PC-9 (cell line): ENCODE measurements at regions of chr19 and their contacts with region 1.

Region 1: DNA sequence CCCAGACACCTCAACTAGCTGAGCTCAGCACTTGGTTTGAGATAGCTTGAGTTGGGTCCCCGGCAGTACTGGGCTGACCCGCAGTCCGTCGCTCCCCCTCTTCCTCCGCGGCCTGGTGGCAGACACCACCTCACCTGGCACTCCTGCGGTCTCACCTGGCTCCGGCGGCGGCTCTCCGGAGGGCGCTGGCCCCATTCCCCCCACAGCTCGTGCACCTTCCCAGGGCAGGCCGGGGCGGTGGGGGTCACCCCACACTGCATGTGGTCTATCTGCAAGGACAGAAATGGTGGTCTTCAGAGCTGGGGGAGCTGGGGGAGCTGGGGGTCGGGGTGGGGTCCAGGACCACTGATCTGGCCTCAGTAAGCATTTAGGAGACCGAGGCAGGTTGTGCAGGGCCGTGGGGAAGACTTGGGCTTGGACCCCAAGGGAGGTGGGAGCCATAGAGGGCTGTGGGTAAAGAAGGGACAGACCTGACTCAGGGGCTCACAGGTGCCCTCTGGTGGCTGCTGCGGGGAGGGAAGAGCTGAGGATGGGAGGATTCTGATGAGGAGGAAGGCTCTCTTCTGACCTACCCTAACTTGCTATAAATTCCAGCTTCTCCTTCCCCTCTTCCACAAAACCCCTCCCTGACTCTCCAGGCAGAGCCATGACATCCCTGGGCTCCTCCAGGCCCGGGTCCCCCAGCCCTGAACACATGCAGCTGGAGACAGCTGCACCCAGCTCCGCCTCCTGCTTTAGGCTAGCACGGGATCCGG is 6.7 kb upstream of the PLIN4 start:
- DNase-seq: peak in 1 of 2 experiments; percentile 46
- H3K4me3 ChIP-seq: no peak overlapping the region
- H3K27ac ChIP-seq: no peak overlapping the region
- H3K4me1 ChIP-seq: peaks cover 16% of the 10 kb centered on the region
- H3K27me3 ChIP-seq: no peaks in the 10 kb centered on the region
- CTCF ChIP-seq: peak; percentile 67

Region 2: DNA sequence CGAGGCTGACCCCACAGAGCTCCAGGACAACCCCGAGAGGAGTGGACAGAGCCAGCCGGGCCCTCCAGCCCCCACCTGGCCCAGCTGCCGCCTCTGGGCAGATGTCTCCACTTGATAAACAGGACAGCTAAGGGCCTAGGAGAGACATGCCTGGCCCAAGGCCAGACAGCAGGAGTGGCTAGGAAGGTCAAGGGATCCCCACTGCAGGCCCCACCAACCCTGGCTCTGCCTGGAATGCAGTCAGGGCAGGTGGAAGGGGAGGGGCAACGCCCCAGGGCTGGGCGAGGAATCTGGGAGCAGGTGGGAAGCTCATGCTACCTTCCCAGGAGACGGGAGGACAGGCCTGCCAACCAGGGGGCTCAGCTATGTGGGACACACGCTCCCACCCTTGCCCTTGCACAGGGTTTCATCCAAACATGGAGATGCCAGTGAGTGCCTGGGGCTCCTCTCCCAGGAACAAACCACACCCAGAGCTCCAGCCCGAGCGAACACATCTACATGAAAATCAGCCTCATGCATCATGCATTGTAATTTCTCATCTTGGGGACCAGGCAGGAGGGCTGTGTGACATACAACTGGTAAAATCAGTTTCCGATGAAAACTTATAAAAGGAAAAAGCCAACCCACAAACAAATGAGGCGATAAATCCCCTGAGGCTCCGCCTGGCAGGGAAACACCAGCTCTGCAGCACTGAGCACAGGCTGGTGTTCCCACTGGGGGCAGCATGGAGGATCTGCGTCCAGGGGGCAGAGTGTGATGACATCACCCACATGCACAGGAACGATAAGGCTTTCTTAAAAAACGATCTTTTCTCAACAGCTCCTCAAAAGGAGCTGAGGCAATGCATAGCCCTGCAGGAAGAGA is 149.6 kb before region 1 on chr19:
- CTCF ChIA-PET with region 1: no interaction called
- POLR2A ChIA-PET with region 1: no interaction called
- intact Hi-C with region 1: no loop called
- DNase-seq: peak; percentile 92 to 97
- H3K4me3 ChIP-seq: peak overlapping the region; percentile 42; the same call in 1 of the 2 replicates
- H3K27ac ChIP-seq: peak overlapping the region; percentile 95
- H3K4me1 ChIP-seq: peaks cover 68% of the 10 kb centered on the region
- H3K27me3 ChIP-seq: no peaks in the 10 kb centered on the region
- CTCF ChIP-seq: no peak; the same call in 1 of the 2 replicates

Region 3: DNA sequence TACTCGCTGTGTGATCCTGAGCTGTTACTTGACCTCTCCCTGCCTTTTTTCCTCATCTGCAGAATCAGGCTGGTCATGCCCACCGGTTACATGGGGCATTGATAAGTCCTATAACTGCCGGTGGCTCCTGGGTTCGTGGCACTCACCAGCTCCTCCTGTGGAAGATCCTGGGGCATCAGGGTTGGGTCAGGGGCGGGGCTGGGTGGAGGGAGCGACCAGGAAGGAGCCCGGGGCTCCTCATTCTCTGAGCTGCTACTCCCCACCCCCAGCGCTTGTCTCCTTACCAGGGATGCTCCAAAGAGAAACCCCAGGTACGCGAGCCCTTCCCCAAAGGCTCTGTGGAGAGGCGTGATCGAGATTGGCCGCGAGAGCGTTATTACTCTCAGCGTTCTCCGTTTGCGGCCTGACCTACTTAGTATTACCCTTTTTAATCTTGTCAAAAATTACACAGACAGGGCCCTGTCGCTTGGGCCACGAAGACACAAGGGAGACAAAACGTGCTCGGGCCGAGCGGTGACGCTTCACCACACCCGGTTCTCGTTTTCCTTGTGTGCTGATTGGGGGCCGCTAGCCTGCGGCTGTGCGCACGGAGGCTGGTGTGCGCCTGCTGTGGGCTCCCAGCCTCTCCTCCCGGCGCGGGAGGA is 42.1 kb before region 1 on chr19:
- CTCF ChIA-PET with region 1: no interaction called
- POLR2A ChIA-PET with region 1: interaction called, 10 read pairs
- intact Hi-C with region 1: no loop called
- DNase-seq: no peak
- H3K4me3 ChIP-seq: no peak overlapping the region
- H3K27ac ChIP-seq: no peak overlapping the region
- H3K4me1 ChIP-seq: no peaks in the 10 kb centered on the region
- H3K27me3 ChIP-seq: no peaks in the 10 kb centered on the region
- CTCF ChIP-seq: no peak

Region 4: DNA sequence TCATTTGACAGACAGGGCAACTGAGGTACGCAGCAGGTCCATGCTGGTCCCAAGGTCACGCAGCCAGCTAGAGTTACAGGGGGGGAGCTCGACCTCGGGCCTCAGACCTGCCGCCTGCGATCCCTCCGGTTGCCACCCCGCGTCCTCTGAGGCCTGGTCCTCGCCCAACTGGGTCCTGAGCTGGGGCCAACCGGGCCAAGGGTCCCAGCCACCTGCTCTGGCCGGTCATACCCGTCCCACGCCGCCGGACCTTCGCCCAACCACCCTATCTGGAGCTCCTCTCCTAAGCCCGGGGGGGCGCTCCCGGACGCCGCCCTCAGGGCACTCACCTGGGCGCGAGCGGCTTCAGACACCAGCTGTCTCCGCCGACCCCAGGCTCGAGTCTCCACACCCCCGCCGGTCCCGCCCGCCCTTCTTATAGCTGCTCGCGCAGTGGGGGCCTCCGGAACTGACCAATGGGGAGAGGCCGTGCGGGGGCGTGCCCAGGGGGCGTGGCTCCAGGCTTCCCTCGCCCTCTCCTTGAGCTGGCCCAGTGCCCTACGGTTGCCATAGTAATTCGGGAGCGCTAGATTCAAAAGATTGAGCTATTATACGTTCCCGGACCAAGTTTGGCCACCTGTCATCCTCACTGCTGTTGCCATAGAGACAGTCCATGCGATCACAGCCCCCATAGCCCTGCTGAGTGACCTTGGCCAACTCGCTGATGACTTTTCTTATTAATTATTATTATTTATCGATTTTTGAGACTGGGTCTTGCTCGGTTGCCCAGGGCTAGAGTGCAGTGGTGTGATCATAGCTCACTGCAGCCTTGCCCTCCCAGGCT is 10.1 kb after region 1 on chr19 and contains the start of gene PLIN5:
- CTCF ChIA-PET with region 1: interaction called, 12 read pairs
- POLR2A ChIA-PET with region 1: interaction called, 4 read pairs
- intact Hi-C with region 1: no loop called
- DNase-seq: peak; percentile 55 to 83
- H3K4me3 ChIP-seq: peak within 1 kb of the TSS; percentile 50; the same call in 1 of the 2 replicates
- H3K27ac ChIP-seq: no peak within 1 kb of the TSS
- H3K4me1 ChIP-seq: peaks cover 16% of the 10 kb centered on the region
- H3K27me3 ChIP-seq: no peaks in the 10 kb centered on the region
- CTCF ChIP-seq: no peak
- total RNA-seq, gene PLIN5: 4.3 and 4.4 TPM in 2 replicates

Region 5: DNA sequence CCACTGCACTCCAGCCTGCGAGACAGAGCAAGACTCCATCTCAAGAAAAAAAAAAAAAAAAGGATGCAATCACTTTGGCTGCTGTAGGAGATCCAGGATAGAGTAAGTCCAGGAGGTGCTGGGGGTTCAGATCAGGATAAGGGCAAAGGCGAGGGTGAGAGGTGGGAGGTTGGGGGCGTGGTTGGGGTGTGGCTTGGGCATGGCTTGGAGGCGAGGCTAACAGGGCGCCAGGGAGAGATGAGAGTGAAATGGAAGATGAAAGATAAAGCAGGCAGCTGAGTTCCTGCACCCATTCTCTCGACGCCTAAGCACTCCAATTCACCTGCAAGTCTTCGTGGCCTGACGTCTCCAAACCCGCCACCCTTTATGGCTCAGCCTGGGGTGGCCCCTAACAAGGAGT is 905.3 kb after region 1 on chr19:
- CTCF ChIA-PET with region 1: no interaction called
- POLR2A ChIA-PET with region 1: interaction called, 24 read pairs
- intact Hi-C with region 1: no loop called
- DNase-seq: no peak
- H3K4me3 ChIP-seq: no peak overlapping the region
- H3K27ac ChIP-seq: no peak overlapping the region
- H3K4me1 ChIP-seq: no peaks in the 10 kb centered on the region
- H3K27me3 ChIP-seq: peaks cover 19% of the 10 kb centered on the region
- CTCF ChIP-seq: no peak